ENCODE measurements at regions of chr17 and their contacts with region 1.

Region 1: DNA sequence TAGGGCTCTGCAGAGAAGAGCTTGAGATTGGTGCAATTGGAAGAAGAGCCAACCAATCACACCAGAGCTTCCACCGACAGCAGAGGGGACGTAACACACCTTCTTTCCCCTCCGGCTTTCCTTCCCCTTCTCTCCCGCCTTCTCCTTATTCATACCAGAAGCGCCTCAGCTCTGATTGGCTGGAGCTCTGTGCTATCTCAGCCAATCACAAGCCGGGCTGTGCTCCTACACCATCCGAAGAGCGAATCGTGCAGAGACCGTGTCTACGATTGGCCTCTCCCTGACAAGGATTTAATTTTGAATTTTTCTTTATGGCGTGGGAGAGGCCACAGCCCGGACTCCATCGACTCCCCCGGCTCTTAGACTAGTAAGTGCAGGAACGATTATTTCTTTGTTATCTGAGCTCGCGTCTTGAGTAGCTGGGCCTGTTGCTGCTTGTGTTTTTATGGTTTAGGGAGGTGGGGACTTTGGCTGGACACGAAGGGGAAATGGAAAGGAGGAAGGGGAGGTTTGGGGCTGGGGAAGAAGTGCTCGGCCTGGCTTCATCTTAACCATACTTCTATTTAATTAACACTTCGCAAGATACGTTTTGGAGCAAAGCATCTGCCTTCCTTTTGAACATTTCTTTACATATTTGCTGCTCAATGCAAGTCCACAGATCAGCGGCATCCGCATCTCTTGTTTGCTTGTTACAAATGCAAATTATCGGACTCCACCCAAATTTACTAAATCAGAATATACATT is at the start of gene PRR11:
- DNase-seq: peak; percentile 98
- ATAC-seq: peak; percentile 88
- H3K4me3 Mint-ChIP-seq: no peak within 1 kb of the TSS
- H3K27ac Mint-ChIP-seq: no peak within 1 kb of the TSS
- H3K4me1 Mint-ChIP-seq: peaks cover 59% of the 10 kb centered on the region
- H3K27me3 Mint-ChIP-seq: no peaks in the 10 kb centered on the region
- total RNA-seq, gene PRR11: 91.9 to 92.1 TPM

Region 2: GRCh38 chr17:59106463-59107305 is 48.9 kb before region 1 on chr17 and contains the start of gene TRIM37:
- CTCF ChIA-PET with region 1: interaction called, 5 read pairs
- POLR2A ChIA-PET with region 1: interaction called, 48 read pairs
- DNase-seq: peak; percentile 99
- ATAC-seq: peak; percentile 98
- H3K4me3 Mint-ChIP-seq: peak within 1 kb of the TSS; percentile 97
- H3K27ac Mint-ChIP-seq: peak within 1 kb of the TSS; percentile 95
- H3K4me1 Mint-ChIP-seq: peaks cover 51% of the 10 kb centered on the region
- H3K27me3 Mint-ChIP-seq: no peaks in the 10 kb centered on the region
- total RNA-seq, gene TRIM37: 25.4 to 28.8 TPM

Measured in activated CD8-positive, alpha-beta T cell treated with anti-CD3 and anti-CD28 coated beads, Interleukin-2, amount 10 ng/mL, durations not matched to agents 7 days and 5 days (primary cell).